Common myeloid progenitor, CD34-positive (primary cell): ENCODE measurements at regions of chr22 and their contacts with region 1.

Region 1: GRCh38 chr22:36171941-36172340 is 11.4 kb upstream of the APOL3 start:
- DNase-seq: no peak
- H3K4me3 ChIP-seq: no peak overlapping the region
- H3K27ac ChIP-seq: no peak overlapping the region
- H3K4me1 ChIP-seq: no peaks in the 10 kb centered on the region
- H3K27me3 ChIP-seq: no peaks in the 10 kb centered on the region

Region 2: GRCh38 chr22:35835998-35836691 is 335.8 kb before region 1 on chr22:
- CTCF ChIA-PET with region 1: no interaction called
- POLR2A ChIA-PET with region 1: no interaction called
- DNase-seq: peak in 2 of 3 donors; percentile 11 to 35
- H3K4me3 ChIP-seq: peak overlapping the region in 4 of 7 experiments; percentile 50 to 81 (median 58)
- H3K27ac ChIP-seq: peak overlapping the region; percentile 30 to 59
- H3K4me1 ChIP-seq: peaks cover 7 to 56% (median 21%) of the 10 kb centered on the region in 4 experiments
- H3K27me3 ChIP-seq: no peaks in the 10 kb centered on the region

Region 3: DNA sequence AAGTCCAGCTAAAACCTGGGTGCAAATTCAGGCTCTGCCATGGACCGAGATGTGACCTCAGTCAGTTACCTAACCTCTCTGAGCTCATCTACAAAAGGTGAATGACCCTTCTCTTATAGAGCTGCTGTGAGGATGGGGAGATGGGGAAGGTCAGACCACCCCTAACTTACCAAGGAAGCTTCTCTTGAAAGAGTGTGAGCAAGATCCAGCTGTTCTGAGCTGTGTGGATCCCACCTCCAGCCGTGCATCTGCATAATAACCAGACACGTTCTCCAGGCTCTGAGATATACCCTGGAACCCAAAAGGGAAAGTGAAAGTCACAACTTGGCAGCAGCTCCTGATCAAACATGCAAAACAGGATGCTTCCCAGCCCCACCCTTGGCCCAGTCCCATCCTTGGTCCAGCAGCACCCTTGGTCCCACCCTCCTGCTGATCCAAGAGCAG is 11.4 kb before region 1 on chr22 and contains the start of gene APOL3:
- CTCF ChIA-PET with region 1: interaction called, 48 read pairs
- POLR2A ChIA-PET with region 1: interaction called, 3 read pairs
- DNase-seq: peak; percentile 60 to 81 (median 77)
- H3K4me3 ChIP-seq: peak within 1 kb of the TSS; percentile 34 to 75 (median 59)
- H3K27ac ChIP-seq: peak within 1 kb of the TSS; percentile 69 to 95
- H3K4me1 ChIP-seq: peaks cover 13 to 72% (median 62%) of the 10 kb centered on the region in 4 experiments
- H3K27me3 ChIP-seq: no peaks in the 10 kb centered on the region

Region 4: DNA sequence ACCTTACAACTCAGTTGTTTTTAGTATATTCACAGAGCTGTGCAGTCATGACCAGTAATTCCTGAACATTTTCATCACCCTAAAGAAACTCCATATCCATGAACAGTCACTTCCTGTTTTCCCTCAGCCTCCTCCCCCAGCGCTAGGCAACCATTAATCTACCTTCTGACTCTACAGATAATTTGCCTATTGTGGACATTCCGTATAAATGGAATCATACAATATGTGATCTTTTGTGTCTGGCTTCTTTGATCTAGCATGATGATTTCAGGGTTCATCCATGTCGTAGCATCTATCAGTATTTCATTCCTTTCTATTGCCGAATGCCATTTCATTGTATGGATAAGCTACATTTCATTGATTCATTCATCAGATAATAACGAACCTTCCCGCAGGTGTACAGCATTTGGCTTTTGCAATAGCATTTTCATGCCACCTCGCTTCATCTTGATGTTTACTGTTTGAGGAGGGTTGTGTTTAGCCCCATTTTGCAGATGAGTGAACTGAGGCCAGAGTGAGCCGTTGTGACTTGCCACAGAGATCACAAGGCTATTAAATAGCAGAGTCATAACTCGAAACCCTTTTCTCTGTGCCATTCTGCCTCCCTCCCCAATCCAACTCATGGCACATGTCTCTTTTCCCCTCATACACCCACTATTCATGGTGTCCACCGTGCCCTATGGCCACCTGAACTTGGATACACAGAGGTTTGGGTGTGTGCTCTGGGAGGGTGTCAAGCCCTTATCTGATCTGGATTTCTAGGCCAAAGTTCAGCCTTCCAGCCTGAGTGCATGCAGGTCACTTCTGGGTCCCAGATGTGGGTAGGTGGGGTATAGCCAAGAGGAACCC is 226.9 kb after region 1 on chr22:
- CTCF ChIA-PET with region 1: no interaction called
- POLR2A ChIA-PET with region 1: no interaction called
- DNase-seq: no peak
- H3K4me3 ChIP-seq: no peak overlapping the region
- H3K27ac ChIP-seq: no peak overlapping the region
- H3K4me1 ChIP-seq: peaks cover 0 to 45% (median 13%) of the 10 kb centered on the region in 4 experiments
- H3K27me3 ChIP-seq: no peaks in the 10 kb centered on the region